ENCODE measurements at regions of chr10 and their contacts with region 1.

Region 1: GRCh38 chr10:42866115-42866995 is 83.8 kb downstream of the BMS1 start:
- DNase-seq: peak; percentile 81
- H3K4me3 ChIP-seq: peak overlapping the region in 2 of 4 donors; percentile 25 to 35
- H3K27ac ChIP-seq: no peak overlapping the region
- H3K4me1 ChIP-seq: peaks cover 0 to 13% (median 9%) of the 10 kb centered on the region in 4 donors
- H3K27me3 ChIP-seq: peaks cover 9 to 40% (median 26%) of the 10 kb centered on the region in 3 donors
- CTCF ChIP-seq: peak in 3 of 4 experiments; percentile 37 to 78 (median 67)
- EP300 ChIP-seq: no peak
- POLR2A ChIP-seq: no peak

Region 2: DNA sequence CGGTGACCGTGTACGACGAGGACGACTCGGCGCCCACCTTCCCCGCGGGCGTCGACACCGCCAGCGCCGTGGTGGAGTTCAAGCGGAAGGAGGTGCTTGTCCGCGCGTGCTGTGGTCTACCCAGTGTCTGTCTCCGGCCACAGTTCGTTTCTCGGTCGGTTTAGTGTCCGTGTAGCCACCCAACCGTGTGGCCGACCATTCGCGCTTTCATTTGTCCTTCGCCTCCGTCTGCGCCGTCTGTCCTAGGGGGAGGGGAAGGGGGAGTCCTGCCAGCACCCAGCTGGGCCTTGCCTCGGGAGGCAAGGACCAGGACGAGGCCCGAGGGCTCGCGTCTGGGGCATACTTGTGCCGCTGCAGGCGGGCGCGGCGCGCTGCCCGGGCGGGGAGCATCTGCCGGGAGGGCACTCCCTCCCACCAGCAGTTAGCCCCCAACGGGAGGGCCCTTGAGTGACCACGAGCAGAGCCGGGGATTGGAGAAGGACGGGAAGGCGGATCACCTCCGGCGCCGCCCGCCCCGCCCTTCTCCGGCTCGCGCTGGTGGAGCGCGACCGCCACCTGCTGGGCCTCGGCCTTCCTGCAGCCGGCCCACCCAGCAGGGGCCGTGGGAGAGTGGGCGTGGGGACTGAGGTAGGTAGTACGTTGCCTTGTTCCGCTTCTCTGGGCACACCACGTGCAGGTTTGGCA is 238.9 kb after region 1 on chr10:
- intact Hi-C with region 1: loop called (anchors 1 kb)
- DNase-seq: peak; percentile 89
- H3K4me3 ChIP-seq: peak overlapping the region; percentile 38 to 60 (median 53)
- H3K27ac ChIP-seq: peak overlapping the region in 1 of 4 donors; percentile 38
- H3K4me1 ChIP-seq: peaks cover 0 to 16% (median 12%) of the 10 kb centered on the region in 4 donors
- H3K27me3 ChIP-seq: peaks cover 4 to 14% (median 6%) of the 10 kb centered on the region in 3 donors
- CTCF ChIP-seq: peak; percentile 97 to 100 (median 99)
- EP300 ChIP-seq: no peak
- POLR2A ChIP-seq: no peak